Panc1 (cell line): ENCODE measurements at regions of chr11 and their contacts with region 1.

Region 1: GRCh38 chr11:13210424-13210823 is 67.2 kb upstream of the BMAL1 start:
- DNase-seq: peak; percentile 71
- ATAC-seq: peak; percentile 91
- H3K4me3 ChIP-seq: no peak overlapping the region
- H3K27ac ChIP-seq: no peak overlapping the region
- H3K4me1 ChIP-seq: no peaks in the 10 kb centered on the region
- H3K27me3 ChIP-seq: no peaks in the 10 kb centered on the region
- CTCF ChIP-seq: peak; percentile 77

Region 2: GRCh38 chr11:13276832-13277767 is 66.7 kb after region 1 on chr11:
- CTCF ChIA-PET with region 1: no interaction called
- POLR2A ChIA-PET with region 1: no interaction called
- in situ Hi-C with region 1: no loop called
- intact Hi-C with region 1: no loop called
- DNase-seq: peak; percentile 64
- ATAC-seq: peak; percentile 98
- H3K4me3 ChIP-seq: peak overlapping the region; percentile 80 to 94
- H3K27ac ChIP-seq: 0 out of 2 replicates have a peak overlapping the region, but pooled peaks have one; percentile 71
- H3K4me1 ChIP-seq: peaks cover 5% of the 10 kb centered on the region
- H3K27me3 ChIP-seq: peaks cover 45% of the 10 kb centered on the region
- CTCF ChIP-seq: no peak

Region 3: GRCh38 chr11:13343931-13344717 is 133.7 kb after region 1 on chr11:
- CTCF ChIA-PET with region 1: interaction called, 13 read pairs
- POLR2A ChIA-PET with region 1: no interaction called
- in situ Hi-C with region 1: no loop called
- intact Hi-C with region 1: loop called (anchors 1 kb)
- DNase-seq: peak; percentile 69
- ATAC-seq: peak; percentile 73
- H3K4me3 ChIP-seq: no peak overlapping the region
- H3K27ac ChIP-seq: no peak overlapping the region
- H3K4me1 ChIP-seq: 0 out of 2 replicates have a peak, but pooled peaks cover 5% of the 10 kb centered on the region
- H3K27me3 ChIP-seq: no peaks in the 10 kb centered on the region
- CTCF ChIP-seq: peak; percentile 88